ENCODE measurements at regions of chr14 and their contacts with region 1.

Region 1: GRCh38 chr14:68816262-68816942 is 23.5 kb upstream of the ZFP36L1 start:
- DNase-seq: peak; percentile 56 to 93
- H3K4me3 ChIP-seq: peak overlapping the region; percentile 56 to 67
- H3K27ac ChIP-seq: peak overlapping the region; percentile 96 to 97
- H3K4me1 ChIP-seq: peaks cover 12 to 24% of the 10 kb centered on the region in 2 donors
- H3K27me3 ChIP-seq: no peaks in the 10 kb centered on the region
- CTCF ChIP-seq: peak; percentile 95 to 100 (median 98)

Region 2: GRCh38 chr14:67837011-67837624 is 979.3 kb before region 1 on chr14:
- intact Hi-C with region 1: loop called (anchors 2 kb)
- DNase-seq: peak in 1 of 2 donors; percentile 71
- H3K4me3 ChIP-seq: no peak overlapping the region
- H3K27ac ChIP-seq: no peak overlapping the region
- H3K4me1 ChIP-seq: no peaks in the 10 kb centered on the region
- H3K27me3 ChIP-seq: no peaks in the 10 kb centered on the region
- CTCF ChIP-seq: peak; percentile 40 to 51 (median 50)

Region 3: DNA sequence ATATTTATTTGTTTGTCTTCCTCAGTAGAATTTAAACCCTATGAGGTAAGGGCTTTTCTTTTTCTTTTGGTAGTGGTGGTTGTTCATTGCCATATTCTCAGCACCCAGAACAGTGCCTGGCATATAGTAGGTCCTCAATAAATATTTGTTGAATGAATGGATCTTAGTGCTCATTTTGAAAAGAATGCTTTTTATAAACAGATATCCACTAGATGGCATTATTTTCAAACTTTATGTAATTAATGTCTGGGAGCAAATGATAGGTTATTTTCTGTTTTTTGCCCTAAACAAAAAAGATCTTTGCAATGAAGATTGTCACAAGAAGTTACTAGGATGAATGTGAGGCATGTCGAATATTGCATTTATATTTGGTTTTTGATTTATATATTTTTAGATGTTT is 932.7 kb before region 1 on chr14:
- intact Hi-C with region 1: loop called (anchors 5 kb)
- DNase-seq: no peak
- H3K4me3 ChIP-seq: no peak overlapping the region
- H3K27ac ChIP-seq: no peak overlapping the region
- H3K4me1 ChIP-seq: peaks cover 0 to 3% of the 10 kb centered on the region in 2 donors
- H3K27me3 ChIP-seq: no peaks in the 10 kb centered on the region
- CTCF ChIP-seq: peak in 2 of 3 experiments; percentile 25 to 40

Region 4: GRCh38 chr14:67934008-67934481 is 882.4 kb before region 1 on chr14:
- intact Hi-C with region 1: loop called (anchors 1 kb)
- DNase-seq: no peak
- H3K4me3 ChIP-seq: no peak overlapping the region
- H3K27ac ChIP-seq: peak overlapping the region in 1 of 2 donors; percentile 24
- H3K4me1 ChIP-seq: peaks cover 0 to 7% of the 10 kb centered on the region in 2 donors
- H3K27me3 ChIP-seq: no peaks in the 10 kb centered on the region
- CTCF ChIP-seq: peak; percentile 63 to 74 (median 69)

Region 5: DNA sequence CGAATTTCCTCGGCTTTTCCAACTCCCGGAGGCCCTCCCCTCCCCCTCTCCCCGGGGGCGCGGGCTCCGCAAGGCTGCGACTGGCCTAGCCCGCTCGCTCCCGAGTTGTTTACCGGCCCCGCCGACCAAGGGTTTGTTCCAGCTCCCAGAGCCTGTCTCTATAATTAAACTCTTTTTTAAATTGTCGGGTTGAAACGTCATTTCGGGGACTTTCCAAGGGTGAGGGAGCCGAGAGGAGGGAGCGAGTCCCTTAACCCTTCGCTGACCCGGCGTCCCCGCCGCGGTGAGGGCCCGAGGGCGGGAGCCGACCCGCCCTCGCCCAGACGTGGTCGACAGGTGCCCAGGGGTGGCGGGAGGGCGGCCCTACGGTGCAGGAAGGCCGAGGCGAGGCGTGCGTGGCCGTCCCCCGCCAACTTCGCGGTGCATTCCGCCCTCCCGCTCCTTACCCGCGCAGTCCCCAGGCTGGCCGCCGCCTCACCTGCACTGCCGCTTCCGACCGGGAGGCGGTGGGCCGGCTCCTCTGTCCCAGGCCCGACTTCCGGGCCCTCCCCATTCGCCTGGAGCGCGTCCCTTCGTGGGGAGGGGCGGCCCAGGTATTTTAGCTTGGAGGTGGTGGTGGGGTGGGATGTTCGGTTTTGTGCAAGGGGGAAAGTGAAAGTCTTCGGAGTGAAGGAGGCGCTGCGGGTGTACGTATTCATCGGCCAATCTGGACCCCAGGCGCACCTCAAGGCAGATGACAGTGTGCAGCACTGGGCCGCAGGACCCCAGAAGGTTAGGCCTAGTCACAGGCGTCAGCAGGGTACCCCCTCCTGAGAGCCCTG is 20.6 kb before region 1 on chr14:
- intact Hi-C with region 1: loop called (anchors 1 kb)
- DNase-seq: peak in 1 of 2 donors; percentile 92
- H3K4me3 ChIP-seq: peak overlapping the region; percentile 77 to 92
- H3K27ac ChIP-seq: peak overlapping the region; percentile 100
- H3K4me1 ChIP-seq: peaks cover 0 to 10% of the 10 kb centered on the region in 2 donors
- H3K27me3 ChIP-seq: no peaks in the 10 kb centered on the region
- CTCF ChIP-seq: peak; percentile 91 to 94 (median 92)

Measured in ascending aorta (tissue), 2 donors.